Psoas muscle (tissue), 8 donors: ENCODE measurements at regions of chr7 and their contacts with region 1.

Region 1: DNA sequence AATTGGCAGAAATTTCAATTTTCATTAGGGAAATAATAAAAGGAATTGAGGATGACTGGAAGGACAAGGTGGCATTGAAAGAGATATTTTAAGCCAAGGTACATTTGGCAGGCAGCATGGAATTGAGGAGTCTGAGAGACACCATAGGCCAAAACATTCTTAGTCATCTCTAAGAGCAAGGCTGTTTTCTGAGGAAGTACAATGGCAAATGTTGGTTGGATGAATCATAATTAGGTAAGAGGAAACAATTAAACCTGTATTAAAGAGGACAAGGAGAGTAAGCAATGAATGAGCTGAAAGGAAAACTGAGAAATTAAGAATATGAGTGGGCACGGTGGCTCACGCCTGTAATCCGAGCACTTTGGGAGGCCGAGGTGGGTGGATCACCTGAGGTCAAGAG is 86.3 kb downstream of the MRPL32 start:
- DNase-seq: no peak
- ATAC-seq: no peak
- H3K4me3 ChIP-seq: no peak overlapping the region
- H3K27ac ChIP-seq: no peak overlapping the region
- H3K4me1 ChIP-seq: no peaks in the 10 kb centered on the region
- H3K27me3 ChIP-seq: peaks cover 2 to 7% (median 2%) of the 10 kb centered on the region in 3 donors
- CTCF ChIP-seq: no peak

Region 2: DNA sequence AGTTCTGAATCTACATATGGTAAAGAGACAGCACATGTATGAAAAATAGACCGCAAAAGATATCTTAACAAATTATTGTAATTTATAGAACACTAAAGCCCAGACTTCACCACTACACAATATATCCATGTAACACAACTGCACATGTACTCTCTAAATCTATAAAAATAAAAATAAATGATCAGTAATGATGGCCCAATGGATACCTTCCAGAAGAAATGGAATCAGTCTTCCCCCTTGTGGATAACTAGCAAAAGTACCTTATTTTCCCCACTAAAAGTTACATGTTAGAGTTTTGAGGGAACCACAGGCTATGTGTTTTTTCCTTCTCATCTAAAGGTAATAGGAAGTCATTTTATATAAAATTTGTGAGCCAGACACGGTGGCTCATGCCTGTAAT is 132.3 kb before region 1 on chr7:
- intact Hi-C with region 1: loop called in 1 of 2 experiments (anchors 10 kb)
- DNase-seq: no peak
- ATAC-seq: no peak
- H3K4me3 ChIP-seq: no peak overlapping the region
- H3K27ac ChIP-seq: no peak overlapping the region
- H3K4me1 ChIP-seq: peaks cover 9% of the 10 kb centered on the region
- H3K27me3 ChIP-seq: no peaks in the 10 kb centered on the region
- CTCF ChIP-seq: no peak

Region 3: DNA sequence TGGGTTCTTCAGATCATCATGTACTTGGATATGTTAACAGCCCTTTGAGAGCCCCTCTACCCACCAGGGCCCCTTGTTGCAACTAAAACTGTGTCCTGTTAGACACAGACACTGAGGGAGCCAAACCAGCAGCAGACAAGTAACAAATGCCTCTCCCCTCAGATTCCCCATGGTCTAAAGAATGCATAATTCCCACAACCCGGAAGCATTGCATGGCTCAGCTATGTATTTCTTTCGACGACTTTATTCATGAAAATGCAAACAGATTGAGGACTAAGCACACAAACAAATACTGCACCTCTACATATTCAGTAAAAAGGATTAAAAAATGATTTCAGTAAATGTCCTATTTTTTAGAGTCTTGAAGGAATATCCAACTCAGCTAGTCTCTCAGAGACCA is 23.9 kb after region 1 on chr7:
- intact Hi-C with region 1: no loop called
- DNase-seq: no peak
- ATAC-seq: no peak
- H3K4me3 ChIP-seq: no peak overlapping the region
- H3K27ac ChIP-seq: no peak overlapping the region
- H3K4me1 ChIP-seq: no peaks in the 10 kb centered on the region
- H3K27me3 ChIP-seq: no peaks in the 10 kb centered on the region
- CTCF ChIP-seq: no peak